Activated CD4-positive, alpha-beta memory T cell treated with anti-CD3 and anti-CD28 coated beads for 36 hours (primary cell): ENCODE measurements at regions of chr1 and their contacts with region 1.

Region 1: DNA sequence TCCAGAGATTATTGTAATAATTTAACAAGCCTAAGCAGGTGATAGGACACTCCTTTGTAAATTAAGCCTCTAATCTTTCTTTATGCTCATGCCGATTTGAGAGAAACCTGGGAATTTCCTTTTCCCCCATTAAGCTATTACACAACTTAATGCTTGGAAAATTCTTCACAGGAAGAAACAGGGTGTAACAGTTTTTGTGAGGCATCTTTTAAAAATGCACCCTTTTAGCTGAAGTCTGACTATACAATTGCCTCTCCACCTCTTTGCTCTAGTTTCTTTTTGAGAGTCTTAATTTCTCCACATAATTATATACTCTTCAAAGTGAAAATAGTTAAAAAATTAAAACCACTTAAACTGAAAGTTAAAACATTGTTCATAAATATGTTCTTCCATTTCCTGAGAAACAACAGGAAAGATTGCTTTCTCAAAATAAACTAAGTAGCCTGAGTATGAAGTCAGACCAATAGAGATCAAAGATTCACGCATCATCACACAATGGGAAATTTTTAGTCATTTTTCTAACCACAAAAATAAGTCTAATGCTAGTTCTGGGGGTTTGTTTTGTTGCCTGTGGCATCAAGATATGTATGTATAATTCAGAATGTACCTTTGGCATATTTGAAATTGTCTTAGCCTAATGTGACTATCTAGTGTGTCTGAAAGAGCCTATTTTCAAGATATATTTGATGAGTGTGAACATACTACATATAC is 34.7 kb downstream of the LRRC8D start:
- DNase-seq: no peak
- H3K4me3 Mint-ChIP-seq: no peak overlapping the region
- H3K27ac Mint-ChIP-seq: no peak overlapping the region
- H3K4me1 Mint-ChIP-seq: peaks cover 18% of the 10 kb centered on the region
- H3K27me3 Mint-ChIP-seq: no peaks in the 10 kb centered on the region

Region 2: DNA sequence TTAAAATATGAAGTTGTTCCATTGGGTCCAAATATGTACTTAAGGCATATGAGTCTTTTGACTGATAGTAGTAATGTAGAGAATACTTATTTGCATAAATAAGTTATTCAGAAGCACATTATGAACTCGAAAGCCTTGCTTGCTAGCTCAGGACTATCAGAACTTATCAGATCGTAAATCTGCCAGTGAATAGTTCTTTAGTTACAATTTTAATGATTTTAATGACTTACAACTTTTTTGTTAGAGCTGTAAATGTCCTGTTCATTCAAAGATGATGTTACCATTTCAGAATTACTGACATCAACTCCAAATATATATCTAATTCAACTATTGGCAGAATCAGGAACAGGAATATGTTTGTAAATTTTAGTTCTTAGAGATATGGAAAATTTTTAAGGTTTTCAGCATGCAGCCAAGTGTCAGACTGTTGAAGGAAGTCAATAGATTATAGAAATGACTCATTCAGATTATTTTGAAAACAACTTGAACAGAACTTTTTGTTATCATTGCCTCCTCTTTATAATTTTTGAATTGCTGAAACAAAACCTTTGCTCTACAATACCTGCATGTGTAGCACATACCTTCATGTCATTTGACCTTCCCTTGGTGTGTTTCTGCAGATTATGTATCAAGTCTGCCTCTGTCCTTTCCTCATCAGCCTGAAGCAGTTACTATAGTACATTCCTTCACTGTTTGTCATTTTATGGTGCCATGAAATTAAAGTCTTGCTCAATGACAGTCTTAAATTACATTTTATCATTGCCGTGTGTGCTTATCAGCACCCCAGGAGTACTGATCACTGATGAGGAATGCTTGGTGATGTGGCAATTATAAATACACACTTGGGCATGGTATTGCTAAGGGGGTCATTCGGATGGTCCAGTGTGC is 10.2 kb after region 1 on chr1:
- CTCF ChIA-PET with region 1: no interaction called
- POLR2A ChIA-PET with region 1: no interaction called
- intact Hi-C with region 1: loop called (anchors 1 kb)
- DNase-seq: no peak
- H3K4me3 Mint-ChIP-seq: no peak overlapping the region
- H3K27ac Mint-ChIP-seq: no peak overlapping the region
- H3K4me1 Mint-ChIP-seq: peaks cover 67% of the 10 kb centered on the region
- H3K27me3 Mint-ChIP-seq: no peaks in the 10 kb centered on the region

Region 3: GRCh38 chr1:89881415-89882058 is 26.0 kb after region 1 on chr1:
- CTCF ChIA-PET with region 1: interaction called, 3 read pairs
- POLR2A ChIA-PET with region 1: no interaction called
- intact Hi-C with region 1: loop called (anchors 1 kb)
- DNase-seq: no peak
- H3K4me3 Mint-ChIP-seq: no peak overlapping the region
- H3K27ac Mint-ChIP-seq: peak overlapping the region; percentile 24
- H3K4me1 Mint-ChIP-seq: peaks cover 46% of the 10 kb centered on the region
- H3K27me3 Mint-ChIP-seq: no peaks in the 10 kb centered on the region

Region 4: DNA sequence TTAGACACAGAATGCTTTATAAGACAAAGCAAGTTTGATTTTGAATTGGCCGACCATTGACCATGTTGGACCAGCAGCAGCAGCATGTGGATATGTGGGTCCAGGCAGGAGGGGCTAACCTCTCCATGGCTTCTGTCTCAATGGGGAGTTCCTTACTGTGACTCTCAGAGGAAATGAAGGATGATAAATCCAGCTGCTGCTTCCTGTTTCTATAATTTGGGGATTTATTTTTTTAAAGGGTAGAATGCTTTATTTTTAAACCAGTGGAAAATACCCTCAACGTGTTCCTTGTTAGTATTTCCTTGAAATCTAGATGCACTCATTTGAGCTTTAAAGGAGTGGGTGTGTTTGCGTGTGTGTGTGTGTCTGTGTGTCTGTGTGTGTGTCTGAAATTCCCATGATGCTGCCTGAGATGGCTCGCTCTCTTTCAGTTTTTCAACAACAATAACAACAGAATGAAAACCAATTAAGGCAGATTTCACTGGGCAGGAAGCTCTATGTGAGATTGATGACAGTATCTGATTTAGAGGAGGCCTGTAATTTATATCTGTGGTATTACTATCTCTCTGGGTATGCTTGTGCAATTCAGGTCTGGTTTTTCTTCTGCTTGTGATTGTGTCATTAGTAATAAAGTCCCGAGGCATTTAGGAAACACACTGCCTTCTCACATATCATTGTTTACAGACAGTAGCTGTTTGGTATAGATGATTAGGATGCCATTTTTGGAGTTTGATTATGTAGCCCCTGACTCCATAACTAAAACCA is 53.3 kb after region 1 on chr1:
- CTCF ChIA-PET with region 1: no interaction called
- POLR2A ChIA-PET with region 1: no interaction called
- intact Hi-C with region 1: loop called (anchors 5 kb)
- DNase-seq: no peak
- H3K4me3 Mint-ChIP-seq: no peak overlapping the region
- H3K27ac Mint-ChIP-seq: peak overlapping the region; percentile 47
- H3K4me1 Mint-ChIP-seq: peaks cover 49% of the 10 kb centered on the region
- H3K27me3 Mint-ChIP-seq: no peaks in the 10 kb centered on the region

Region 5: GRCh38 chr1:89953072-89953626 is 97.6 kb after region 1 on chr1:
- CTCF ChIA-PET with region 1: no interaction called
- POLR2A ChIA-PET with region 1: no interaction called
- intact Hi-C with region 1: no loop called
- DNase-seq: peak; percentile 61
- H3K4me3 Mint-ChIP-seq: no peak overlapping the region
- H3K27ac Mint-ChIP-seq: no peak overlapping the region
- H3K4me1 Mint-ChIP-seq: peaks cover 14% of the 10 kb centered on the region
- H3K27me3 Mint-ChIP-seq: no peaks in the 10 kb centered on the region